ENCODE measurements at regions of chr9 and their contacts with region 1.

Region 1: GRCh38 chr9:73149371-73150067 is 2.1 kb upstream of the ANXA1 start:
- DNase-seq: peak in 1 of 2 donors; percentile 65
- ATAC-seq: peak; percentile 52 to 67 (median 65)
- H3K4me3 ChIP-seq: peak overlapping the region; percentile 3
- H3K4me3 Mint-ChIP-seq: peak overlapping the region; percentile 70
- H3K27ac ChIP-seq: peak overlapping the region; percentile 61
- H3K27ac Mint-ChIP-seq: peak overlapping the region; percentile 87 to 95
- H3K4me1 ChIP-seq: peaks cover 13% of the 10 kb centered on the region
- H3K4me1 Mint-ChIP-seq: peaks cover 41 to 52% of the 10 kb centered on the region in 2 donors
- H3K27me3 ChIP-seq: no peaks in the 10 kb centered on the region
- H3K27me3 Mint-ChIP-seq: no peaks in the 10 kb centered on the region
- CTCF ChIP-seq: no peak

Region 2: DNA sequence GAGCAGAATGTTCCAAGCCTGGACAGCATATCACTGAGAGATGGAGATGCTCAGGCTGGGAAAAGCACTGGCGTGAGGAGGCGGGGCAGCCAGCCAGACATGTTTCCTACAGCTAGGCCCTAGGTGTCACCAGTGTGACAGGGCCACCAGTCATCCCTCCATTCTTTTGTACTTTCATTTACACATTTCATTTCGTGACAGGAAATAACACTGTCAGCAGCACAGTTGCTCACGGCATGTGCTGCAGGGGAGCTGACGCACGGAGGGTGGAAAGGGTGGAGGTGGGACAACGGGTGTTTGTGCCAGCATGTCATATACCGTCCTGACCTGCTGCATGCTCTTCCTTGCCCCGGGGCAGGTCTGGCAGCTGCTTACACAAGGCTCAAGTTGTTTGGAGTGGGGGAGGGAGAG is 1366.4 kb before region 1 on chr9:
- intact Hi-C with region 1: loop called (anchors 5 kb)
- DNase-seq: peak; percentile 85 to 96
- ATAC-seq: peak; percentile 86 to 97 (median 89)
- H3K4me3 ChIP-seq: no peak overlapping the region
- H3K4me3 Mint-ChIP-seq: peak overlapping the region; percentile 69
- H3K27ac ChIP-seq: peak overlapping the region; percentile 87
- H3K27ac Mint-ChIP-seq: peak overlapping the region; percentile 94 to 98
- H3K4me1 ChIP-seq: peaks cover 45% of the 10 kb centered on the region
- H3K4me1 Mint-ChIP-seq: peaks cover 59 to 63% of the 10 kb centered on the region in 2 donors
- H3K27me3 ChIP-seq: no peaks in the 10 kb centered on the region
- H3K27me3 Mint-ChIP-seq: no peaks in the 10 kb centered on the region
- CTCF ChIP-seq: no peak

Region 3: GRCh38 chr9:72364679-72365524 is 784.6 kb before region 1 on chr9 and contains the start of gene ZFAND5:
- intact Hi-C with region 1: loop called (anchors 5 kb)
- DNase-seq: peak; percentile 97
- ATAC-seq: peak; percentile 80 to 93 (median 82)
- H3K4me3 ChIP-seq: peak within 1 kb of the TSS; percentile 76
- H3K4me3 Mint-ChIP-seq: peak within 1 kb of the TSS; percentile 94
- H3K27ac ChIP-seq: peak within 1 kb of the TSS; percentile 99
- H3K27ac Mint-ChIP-seq: peak within 1 kb of the TSS; percentile 99
- H3K4me1 ChIP-seq: peaks cover 14% of the 10 kb centered on the region
- H3K4me1 Mint-ChIP-seq: peaks cover 47 to 51% of the 10 kb centered on the region in 2 donors
- H3K27me3 ChIP-seq: no peaks in the 10 kb centered on the region
- H3K27me3 Mint-ChIP-seq: no peaks in the 10 kb centered on the region
- CTCF ChIP-seq: no peak
- total RNA-seq, gene ZFAND5: 307 to 450 (median 318) TPM

Region 4: DNA sequence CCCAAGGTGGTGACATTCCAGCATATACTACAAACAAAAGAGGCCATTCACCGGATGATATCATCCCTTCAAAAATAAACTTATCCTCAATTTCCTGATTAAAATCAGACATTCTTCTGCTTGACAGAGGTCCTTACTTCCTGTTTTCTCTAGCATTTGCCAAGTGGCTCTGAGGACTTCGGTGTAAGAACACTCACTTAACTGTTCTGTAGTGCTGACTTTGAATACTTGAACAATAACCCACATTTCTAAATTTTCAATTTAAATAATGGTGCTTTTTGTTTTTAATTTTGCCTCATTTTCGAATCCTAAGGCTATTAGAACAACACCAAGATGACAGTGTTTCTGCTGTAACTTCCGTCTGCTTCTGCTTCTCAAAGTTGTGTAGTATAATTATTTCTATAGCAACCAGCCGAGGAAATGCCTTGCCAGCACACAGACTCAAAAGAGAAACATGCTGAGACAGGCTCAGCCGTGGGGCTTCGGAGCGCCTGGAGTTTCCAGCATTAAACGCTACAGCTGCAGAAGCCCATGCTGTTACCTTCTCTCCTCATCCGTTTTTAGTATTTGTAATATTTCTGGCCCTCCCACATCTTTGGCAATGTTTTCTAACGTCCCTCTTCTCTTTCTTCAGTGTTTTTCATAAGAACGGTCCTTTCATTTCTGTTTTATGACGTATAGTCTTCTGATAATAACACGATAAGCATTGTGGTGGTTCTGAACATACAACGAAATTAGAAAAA is 17.3 kb before region 1 on chr9:
- intact Hi-C with region 1: loop called (anchors 1 kb)
- DNase-seq: peak; percentile 72 to 90
- ATAC-seq: peak; percentile 94 to 97 (median 97)
- H3K4me3 ChIP-seq: peak overlapping the region; percentile 82
- H3K4me3 Mint-ChIP-seq: peak overlapping the region; percentile 91
- H3K27ac ChIP-seq: peak overlapping the region; percentile 94
- H3K27ac Mint-ChIP-seq: peak overlapping the region; percentile 86 to 92
- H3K4me1 ChIP-seq: no peaks in the 10 kb centered on the region
- H3K4me1 Mint-ChIP-seq: peaks cover 6 to 10% of the 10 kb centered on the region in 2 donors
- H3K27me3 ChIP-seq: no peaks in the 10 kb centered on the region
- H3K27me3 Mint-ChIP-seq: no peaks in the 10 kb centered on the region
- CTCF ChIP-seq: no peak

Region 5: GRCh38 chr9:74960563-74960962 is 1811.0 kb after region 1 on chr9:
- intact Hi-C with region 1: loop called (anchors 5 kb)
- DNase-seq: no peak
- ATAC-seq: peak; percentile 59 to 70 (median 60)
- H3K4me3 ChIP-seq: no peak overlapping the region
- H3K4me3 Mint-ChIP-seq: peak overlapping the region; percentile 59
- H3K27ac ChIP-seq: no peak overlapping the region
- H3K27ac Mint-ChIP-seq: peak overlapping the region; percentile 72 to 84
- H3K4me1 ChIP-seq: peaks cover 7% of the 10 kb centered on the region
- H3K4me1 Mint-ChIP-seq: peaks cover 44 to 60% of the 10 kb centered on the region in 2 donors
- H3K27me3 ChIP-seq: no peaks in the 10 kb centered on the region
- H3K27me3 Mint-ChIP-seq: no peaks in the 10 kb centered on the region
- CTCF ChIP-seq: no peak

Measured in natural killer cell (primary cell).